Activated CD4-positive, alpha-beta memory T cell treated with anti-CD3 and anti-CD28 coated beads for 36 hours (primary cell): ENCODE measurements at regions of chr17 and their contacts with region 1.

Region 1: DNA sequence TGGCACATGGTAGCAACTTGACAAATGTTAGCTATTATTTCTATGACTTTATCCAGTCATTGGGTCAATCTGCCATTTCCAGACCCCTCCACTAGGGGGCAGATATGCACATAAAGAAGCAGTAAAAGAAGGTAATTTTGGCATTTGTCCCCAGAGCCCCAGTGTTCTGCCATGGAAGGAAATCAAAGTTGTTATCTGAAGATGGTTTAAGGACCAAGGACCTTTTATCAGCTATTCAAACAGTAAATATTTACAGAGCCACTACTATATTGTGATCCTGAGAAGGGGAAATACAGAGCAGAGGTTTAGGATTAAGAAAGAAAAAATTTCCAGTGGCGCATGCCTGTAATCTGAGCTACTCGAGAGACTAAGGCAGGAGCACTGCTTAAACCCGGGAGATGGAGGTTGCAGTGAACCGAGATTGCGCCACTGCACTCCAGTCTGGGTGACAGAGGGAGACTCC is 20.0 kb downstream of the TRAF4 start:
- DNase-seq: peak; percentile 84
- H3K4me3 Mint-ChIP-seq: no peak overlapping the region
- H3K27ac Mint-ChIP-seq: peak overlapping the region; percentile 73
- H3K4me1 Mint-ChIP-seq: peaks cover 23% of the 10 kb centered on the region
- H3K27me3 Mint-ChIP-seq: no peaks in the 10 kb centered on the region

Region 2: DNA sequence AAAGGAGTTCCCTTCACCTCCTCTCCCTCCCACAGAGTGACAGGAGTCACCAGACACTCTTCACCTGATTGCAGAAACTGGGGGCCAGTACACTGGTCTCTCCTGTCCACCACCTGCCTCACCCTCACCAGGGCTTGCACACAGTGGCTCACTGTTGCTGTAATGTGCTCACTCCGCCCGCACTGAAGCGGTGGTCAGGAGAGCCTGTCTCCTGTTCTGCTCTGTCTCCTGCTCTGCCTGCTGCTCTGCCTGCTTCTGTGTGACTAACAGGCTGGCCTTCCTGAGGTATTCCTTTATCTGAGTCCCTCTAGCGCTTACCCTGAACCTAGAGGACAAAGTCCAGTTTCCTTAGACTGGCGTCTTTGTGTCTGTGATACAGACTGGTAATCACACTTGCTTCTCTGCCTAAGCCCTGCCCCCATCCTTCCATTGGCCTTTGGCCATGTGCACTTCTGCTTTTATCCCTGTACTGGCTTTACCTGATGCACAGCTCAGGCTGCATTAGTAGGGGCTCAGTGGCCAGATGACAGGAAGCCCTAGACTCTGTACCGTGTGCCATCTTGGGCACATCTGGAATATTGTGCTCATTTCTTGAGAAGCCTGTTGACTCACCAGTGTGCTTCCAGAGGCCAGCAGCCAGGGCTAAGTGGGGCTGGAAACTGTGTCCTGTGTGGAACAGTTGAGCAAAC is 65.4 kb before region 1 on chr17:
- CTCF ChIA-PET with region 1: no interaction called
- POLR2A ChIA-PET with region 1: no interaction called
- intact Hi-C with region 1: no loop called
- DNase-seq: no peak
- H3K4me3 Mint-ChIP-seq: no peak overlapping the region
- H3K27ac Mint-ChIP-seq: no peak overlapping the region
- H3K4me1 Mint-ChIP-seq: no peaks in the 10 kb centered on the region
- H3K27me3 Mint-ChIP-seq: no peaks in the 10 kb centered on the region

Region 3: DNA sequence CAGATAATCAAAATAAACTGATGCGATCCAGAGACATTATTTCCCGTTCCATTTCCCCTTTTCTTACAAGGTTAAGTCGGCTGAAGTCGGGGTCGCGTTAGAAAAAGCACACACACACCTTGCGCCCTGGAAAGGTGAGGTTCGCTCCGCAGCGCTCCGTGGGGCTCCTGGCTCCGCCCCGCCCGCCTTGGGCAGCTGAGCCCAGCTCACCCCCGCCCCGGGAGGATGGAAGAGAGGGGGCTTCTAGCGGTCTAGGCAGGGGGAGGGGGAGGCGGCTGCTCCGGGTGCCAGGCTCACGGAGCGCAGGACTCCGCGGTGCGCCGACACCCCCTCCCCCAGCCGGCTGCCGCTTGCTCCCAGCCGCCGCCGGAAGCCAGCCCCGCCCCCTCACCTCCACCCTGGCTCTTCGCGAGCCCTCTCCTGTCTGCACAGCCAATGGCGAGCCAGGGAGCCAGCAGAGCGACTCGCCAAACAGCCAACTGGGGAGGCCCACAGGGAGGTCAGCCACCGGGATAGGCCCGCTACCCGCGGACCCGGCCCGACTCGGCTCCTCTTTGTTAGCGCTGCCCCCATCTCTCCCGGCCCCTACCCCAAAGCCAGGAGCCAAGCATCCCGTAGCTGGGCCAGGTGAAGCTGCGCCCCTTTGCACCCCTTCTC is 48.4 kb after region 1 on chr17:
- CTCF ChIA-PET with region 1: interaction called, 61 read pairs
- POLR2A ChIA-PET with region 1: interaction called, 7 read pairs
- intact Hi-C with region 1: loop called (anchors 1 kb)
- DNase-seq: peak; percentile 98
- H3K4me3 Mint-ChIP-seq: peak overlapping the region; percentile 82
- H3K27ac Mint-ChIP-seq: peak overlapping the region; percentile 92
- H3K4me1 Mint-ChIP-seq: peaks cover 43% of the 10 kb centered on the region
- H3K27me3 Mint-ChIP-seq: no peaks in the 10 kb centered on the region

Region 4: GRCh38 chr17:28849281-28849680 is 85.4 kb after region 1 on chr17:
- CTCF ChIA-PET with region 1: interaction called, 16 read pairs
- POLR2A ChIA-PET with region 1: no interaction called
- intact Hi-C with region 1: no loop called
- DNase-seq: peak; percentile 43
- H3K4me3 Mint-ChIP-seq: no peak overlapping the region
- H3K27ac Mint-ChIP-seq: no peak overlapping the region
- H3K4me1 Mint-ChIP-seq: peaks cover 4% of the 10 kb centered on the region
- H3K27me3 Mint-ChIP-seq: no peaks in the 10 kb centered on the region

Region 5: DNA sequence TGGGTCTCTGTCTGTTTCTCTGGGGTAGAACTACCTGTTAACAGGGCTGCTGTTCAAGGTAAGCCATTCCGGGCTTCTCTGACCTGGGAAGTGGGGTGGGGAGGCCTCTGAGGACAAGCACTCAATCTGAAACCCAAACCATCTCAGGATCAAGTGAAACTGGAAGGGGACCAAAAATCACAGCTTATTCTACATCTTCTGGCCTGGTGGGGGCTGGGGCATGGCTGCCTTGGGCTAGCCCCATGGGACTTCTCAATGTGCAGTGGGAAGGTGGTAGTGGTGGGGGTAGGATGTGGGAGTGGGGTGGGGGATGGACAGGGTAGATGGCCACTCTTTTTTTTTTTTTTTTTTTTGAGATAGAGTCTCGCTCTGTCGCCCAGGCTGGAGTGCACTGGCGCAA is 128.2 kb after region 1 on chr17:
- CTCF ChIA-PET with region 1: interaction called, 22 read pairs
- POLR2A ChIA-PET with region 1: interaction called, 7 read pairs
- intact Hi-C with region 1: no loop called
- DNase-seq: no peak
- H3K4me3 Mint-ChIP-seq: no peak overlapping the region
- H3K27ac Mint-ChIP-seq: peak overlapping the region; percentile 82
- H3K4me1 Mint-ChIP-seq: peaks cover 56% of the 10 kb centered on the region
- H3K27me3 Mint-ChIP-seq: no peaks in the 10 kb centered on the region

Region 6: GRCh38 chr17:28908640-28909167 is 144.9 kb after region 1 on chr17:
- CTCF ChIA-PET with region 1: interaction called, 15 read pairs
- POLR2A ChIA-PET with region 1: no interaction called
- intact Hi-C with region 1: loop called (anchors 5 kb)
- DNase-seq: no peak
- H3K4me3 Mint-ChIP-seq: no peak overlapping the region
- H3K27ac Mint-ChIP-seq: no peak overlapping the region
- H3K4me1 Mint-ChIP-seq: no peaks in the 10 kb centered on the region
- H3K27me3 Mint-ChIP-seq: no peaks in the 10 kb centered on the region

Region 7: GRCh38 chr17:28959471-28959871 is 195.6 kb after region 1 on chr17:
- CTCF ChIA-PET with region 1: no interaction called
- POLR2A ChIA-PET with region 1: no interaction called
- intact Hi-C with region 1: no loop called
- DNase-seq: no peak
- H3K4me3 Mint-ChIP-seq: no peak overlapping the region
- H3K27ac Mint-ChIP-seq: no peak overlapping the region
- H3K4me1 Mint-ChIP-seq: no peaks in the 10 kb centered on the region
- H3K27me3 Mint-ChIP-seq: peaks cover 17% of the 10 kb centered on the region